Breast epithelium (tissue), 4 donors: ENCODE measurements at regions of chr21 and their contacts with region 1.

Region 1: DNA sequence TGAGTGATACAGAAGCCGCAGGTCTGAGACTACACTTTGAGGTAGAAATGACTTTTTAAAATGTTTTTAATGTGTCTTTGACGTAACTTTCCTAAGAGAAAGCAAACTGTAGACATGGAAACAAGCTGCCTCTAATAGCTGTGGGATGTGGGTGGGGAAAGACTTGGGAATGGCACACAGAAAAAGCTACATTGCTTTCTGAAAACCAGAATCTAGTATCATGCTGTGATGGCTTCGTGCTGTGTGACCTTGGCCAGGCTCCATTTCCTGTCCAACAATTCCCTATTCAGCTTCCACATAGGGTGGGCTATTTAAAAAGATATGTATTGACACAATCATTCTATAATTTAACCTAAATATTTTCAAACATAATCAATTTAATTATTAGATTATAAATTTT is 909.1 kb downstream of the NCAM2 start:
- DNase-seq: no peak
- H3K4me3 ChIP-seq: no peak overlapping the region
- H3K27ac ChIP-seq: no peak overlapping the region
- H3K4me1 ChIP-seq: no peaks in the 10 kb centered on the region
- H3K27me3 ChIP-seq: no peaks in the 10 kb centered on the region
- CTCF ChIP-seq: no peak
- POLR2A ChIP-seq: no peak

Region 2: GRCh38 chr21:22319435-22319834 is 412.2 kb after region 1 on chr21:
- intact Hi-C with region 1: loop called (anchors 5 kb)
- DNase-seq: no peak
- H3K4me3 ChIP-seq: no peak overlapping the region
- H3K27ac ChIP-seq: no peak overlapping the region
- H3K4me1 ChIP-seq: no peaks in the 10 kb centered on the region
- H3K27me3 ChIP-seq: no peaks in the 10 kb centered on the region
- CTCF ChIP-seq: no peak
- POLR2A ChIP-seq: no peak